ENCODE measurements at regions of chr19 and their contacts with region 1.

Region 1: DNA sequence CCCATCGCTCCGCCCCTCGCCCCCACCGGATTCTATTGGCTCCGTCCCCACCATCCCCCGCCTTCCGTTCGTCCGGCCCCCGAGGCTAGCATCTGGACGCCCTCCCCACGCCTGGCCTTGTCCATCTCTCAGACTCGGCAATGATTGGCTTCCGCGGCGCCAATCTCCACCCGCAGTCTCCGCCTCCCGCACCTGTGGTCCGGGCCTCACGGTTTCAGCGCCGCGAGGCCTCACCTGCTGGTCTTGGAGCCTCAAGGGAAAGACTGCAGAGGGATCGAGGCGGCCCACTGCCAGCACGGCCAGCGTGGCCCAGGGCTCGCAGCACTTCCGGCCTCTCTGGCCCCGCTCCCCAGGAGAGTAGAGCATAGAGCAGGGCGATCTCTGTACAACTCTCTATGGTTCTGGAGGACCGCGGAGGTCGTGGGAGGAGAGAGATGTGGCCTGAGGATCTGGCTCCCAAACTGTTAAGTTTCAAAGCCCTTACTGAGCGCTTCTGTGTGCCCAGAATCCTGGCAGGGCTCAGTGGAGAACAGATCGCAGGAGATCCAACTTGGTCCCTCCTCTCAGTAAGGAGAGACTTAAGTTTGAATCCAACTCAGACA is at the start of gene ERCC1:
- DNase-seq: peak; percentile 97
- ATAC-seq: peak; percentile 85
- total RNA-seq, gene ERCC1: 166 TPM

Region 2: GRCh38 chr19:45405435-45406225 is 18.1 kb before region 1 on chr19:
- intact Hi-C with region 1: loop called (anchors 2 kb)
- DNase-seq: peak; percentile 93
- ATAC-seq: peak; percentile 60

Region 3: DNA sequence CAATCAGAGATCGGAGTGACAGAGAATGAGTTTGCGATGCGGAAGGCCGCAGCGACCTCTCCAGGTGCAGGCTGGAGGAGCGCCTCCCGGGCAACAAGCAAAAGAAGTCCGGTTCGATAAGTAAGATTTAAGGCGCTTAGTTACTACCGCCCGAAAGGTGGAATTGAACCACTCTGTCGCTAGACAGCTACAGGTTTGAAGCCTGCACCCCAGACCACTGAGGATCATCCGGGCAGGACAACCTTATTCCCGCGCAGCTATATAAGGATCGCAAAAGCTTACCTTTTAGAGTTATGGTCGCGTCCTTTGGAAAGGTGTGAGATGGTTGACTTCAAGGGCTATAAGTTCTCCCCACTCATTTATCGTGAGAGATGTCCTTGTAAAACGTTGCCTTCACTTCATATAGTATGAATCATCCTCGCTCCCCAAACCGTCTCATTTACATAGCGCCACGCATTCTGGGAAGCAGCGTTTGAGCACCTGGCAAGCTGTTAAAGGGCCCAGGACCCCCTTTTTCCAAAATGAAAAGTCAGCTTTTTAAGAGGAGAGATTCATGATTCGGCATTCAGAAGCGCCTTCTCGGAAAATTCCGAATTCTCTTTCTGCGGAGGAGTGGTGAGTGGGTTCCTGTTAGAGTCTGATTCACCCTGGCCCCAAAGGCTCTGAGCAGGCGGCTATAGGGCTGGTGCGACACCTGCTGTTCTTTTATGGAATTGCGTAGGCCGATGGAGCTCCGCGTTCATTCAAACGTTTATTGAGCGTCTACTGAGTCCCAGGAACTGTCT is 55.0 kb after region 1 on chr19:
- intact Hi-C with region 1: loop called (anchors 1 kb)
- DNase-seq: peak; percentile 92
- ATAC-seq: peak; percentile 95

Measured in Right ventricle myocardium inferior (tissue), 1 donor.